ENCODE measurements at regions of chr7 and their contacts with region 1.

Region 1: DNA sequence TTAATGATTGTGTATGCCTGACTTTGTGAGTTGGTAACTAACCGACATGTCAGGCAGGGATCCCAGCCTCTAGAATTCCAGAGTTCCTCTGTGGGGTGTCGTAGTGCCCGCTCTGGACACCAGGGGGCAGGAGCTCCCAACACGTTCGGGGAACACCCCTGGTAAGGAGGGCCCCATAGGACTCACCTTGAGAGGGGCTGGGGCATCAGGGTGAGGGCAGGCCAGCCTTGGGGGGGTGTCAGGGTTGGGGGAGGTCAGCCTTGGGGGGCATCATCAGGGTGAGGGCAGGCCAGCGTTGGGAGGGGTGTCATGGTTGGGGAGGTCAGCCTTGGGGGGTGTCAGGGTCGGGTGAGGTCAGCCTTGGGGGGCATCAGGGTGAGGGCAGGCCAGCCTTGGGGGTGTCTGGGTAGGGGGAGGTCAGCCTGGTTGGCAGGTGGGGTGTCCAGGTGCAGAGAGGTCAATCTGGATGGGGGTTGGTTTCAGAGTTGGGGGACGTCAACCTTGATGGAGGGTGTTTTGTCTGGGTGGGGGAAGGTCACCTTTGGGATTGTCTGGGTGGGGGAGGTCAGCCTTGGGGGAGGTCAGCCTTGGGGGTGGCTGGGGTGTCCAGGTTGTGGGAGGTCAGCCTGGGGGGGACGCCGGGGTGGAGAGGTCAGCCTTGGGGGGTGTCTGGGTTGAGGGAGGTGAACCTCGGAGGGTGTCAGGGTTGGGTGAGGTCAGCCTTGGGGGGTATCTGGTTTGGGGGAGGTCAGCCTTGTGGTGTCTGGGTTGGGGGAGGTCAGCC is 45.6 kb upstream of the SUN1 start:
- DNase-seq: peak; percentile 83 to 93
- ATAC-seq: peak; percentile 76
- H3K4me3 ChIP-seq: no peak overlapping the region
- H3K27ac ChIP-seq: no peak overlapping the region
- H3K4me1 ChIP-seq: no peaks in the 10 kb centered on the region
- H3K27me3 ChIP-seq: no peaks in the 10 kb centered on the region

Region 2: GRCh38 chr7:821688-822087 is 35.0 kb after region 1 on chr7:
- intact Hi-C with region 1: loop called in 1 of 2 experiments (anchors 5 kb)
- DNase-seq: peak; percentile 35 to 42
- ATAC-seq: no peak
- H3K4me3 ChIP-seq: no peak overlapping the region
- H3K27ac ChIP-seq: peak overlapping the region in 1 of 2 donors; percentile 32
- H3K4me1 ChIP-seq: peaks cover 0 to 7% of the 10 kb centered on the region in 2 donors
- H3K27me3 ChIP-seq: no peaks in the 10 kb centered on the region

Region 3: GRCh38 chr7:836411-837400 is 50.0 kb after region 1 on chr7:
- intact Hi-C with region 1: loop called (anchors 5 kb)
- DNase-seq: no peak
- ATAC-seq: no peak
- H3K4me3 ChIP-seq: no peak overlapping the region
- H3K27ac ChIP-seq: peak overlapping the region in 1 of 2 donors; percentile 76
- H3K4me1 ChIP-seq: no peaks in the 10 kb centered on the region
- H3K27me3 ChIP-seq: no peaks in the 10 kb centered on the region

Region 4: GRCh38 chr7:873367-874002 is 86.8 kb after region 1 on chr7:
- intact Hi-C with region 1: loop called (anchors 1 to 5 kb)
- DNase-seq: peak; percentile 83 to 91
- ATAC-seq: peak; percentile 68
- H3K4me3 ChIP-seq: no peak overlapping the region
- H3K27ac ChIP-seq: peak overlapping the region in 1 of 2 donors; percentile 6
- H3K4me1 ChIP-seq: no peaks in the 10 kb centered on the region
- H3K27me3 ChIP-seq: no peaks in the 10 kb centered on the region